BJ (cell line): ENCODE measurements at regions of chr11 and their contacts with region 1.

Region 1: DNA sequence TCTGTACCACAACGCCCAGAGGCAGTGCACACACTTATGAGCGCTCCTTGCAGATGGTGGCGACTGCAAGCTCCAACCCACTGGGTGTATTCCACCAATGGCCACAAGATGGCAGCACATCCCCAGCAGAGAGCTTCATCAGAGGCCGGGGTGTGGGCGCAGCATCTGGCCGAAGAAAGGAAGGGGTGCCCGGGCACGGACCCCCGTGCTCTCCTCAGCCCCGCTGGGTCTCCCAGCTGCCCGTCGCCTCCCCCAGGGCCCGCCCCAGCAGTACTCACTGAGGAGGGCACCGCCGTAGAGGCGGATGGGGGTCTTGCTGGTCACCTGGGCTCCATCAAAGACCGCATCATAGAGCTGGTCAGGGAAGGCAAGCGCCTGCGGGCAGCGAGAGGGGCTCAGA is 14.2 kb downstream of the TP53I11 start:
- DNase-seq: no peak
- H3K4me3 ChIP-seq: no peak overlapping the region
- H3K27me3 ChIP-seq: 0 out of 2 replicates have a peak, but pooled peaks cover 2% of the 10 kb centered on the region
- CTCF ChIP-seq: peak; percentile 88

Region 2: DNA sequence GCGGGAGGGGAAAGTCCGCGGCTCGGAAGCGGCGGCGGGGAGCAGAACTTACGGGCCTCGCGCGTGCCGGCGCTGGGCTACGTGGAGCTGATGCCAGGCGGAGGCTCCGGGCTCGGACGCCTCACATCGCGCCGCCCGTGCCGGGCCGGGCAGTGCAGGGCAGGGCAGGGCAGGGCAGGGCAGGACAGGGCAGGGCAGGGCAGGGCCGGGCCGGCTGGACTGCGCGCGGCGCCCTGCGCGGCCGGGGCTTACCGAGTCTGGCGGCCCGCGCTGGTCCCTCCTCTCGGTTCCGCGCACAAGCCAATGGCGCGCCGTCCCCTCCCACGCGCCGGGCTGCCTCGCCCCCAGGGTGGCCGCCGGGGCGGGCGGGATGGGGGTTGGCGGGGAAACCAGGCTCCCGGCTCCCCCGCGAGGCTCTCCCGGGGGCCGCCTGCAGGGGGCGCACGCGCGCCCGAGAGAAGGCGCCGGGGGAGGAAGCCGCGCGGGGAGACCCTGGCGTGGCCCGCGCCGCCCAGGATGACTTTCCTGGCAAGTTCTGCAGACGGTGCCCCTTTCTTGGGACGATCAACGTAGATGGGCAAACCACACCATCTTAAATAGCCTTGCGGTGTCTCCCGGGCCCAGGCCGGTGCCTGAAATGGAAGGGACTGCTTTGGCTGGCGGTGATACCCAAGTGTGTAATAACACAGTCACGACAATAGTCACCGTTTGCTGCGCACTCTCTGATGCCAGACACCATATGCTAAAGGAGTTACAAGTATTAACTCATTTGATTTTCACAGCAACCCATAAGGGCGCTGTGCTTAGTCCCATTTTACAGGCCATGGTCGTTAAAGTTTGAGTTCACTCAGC is 14.3 kb after region 1 on chr11 and contains the start of gene TP53I11:
- CTCF ChIA-PET with region 1: interaction called, 48 read pairs
- POLR2A ChIA-PET with region 1: no interaction called
- DNase-seq: peak; percentile 18
- H3K4me3 ChIP-seq: peak within 1 kb of the TSS; percentile 92
- H3K27me3 ChIP-seq: no peaks in the 10 kb centered on the region
- CTCF ChIP-seq: peak; percentile 37
- polyA plus RNA-seq, gene TP53I11: 22.2 and 29.6 TPM in 2 replicates